ENCODE measurements at regions of chr19 and their contacts with region 1.

Region 1: GRCh38 chr19:8513687-8514504 is at the start of gene ZNF414:
- DNase-seq: peak; percentile 99
- ATAC-seq: peak; percentile 81
- H3K4me3 Mint-ChIP-seq: peak within 1 kb of the TSS; percentile 81
- H3K27ac Mint-ChIP-seq: peak within 1 kb of the TSS; percentile 97
- H3K4me1 Mint-ChIP-seq: peaks cover 55% of the 10 kb centered on the region
- H3K27me3 Mint-ChIP-seq: no peaks in the 10 kb centered on the region
- total RNA-seq, gene ZNF414: 21.0 to 23.7 TPM

Region 2: DNA sequence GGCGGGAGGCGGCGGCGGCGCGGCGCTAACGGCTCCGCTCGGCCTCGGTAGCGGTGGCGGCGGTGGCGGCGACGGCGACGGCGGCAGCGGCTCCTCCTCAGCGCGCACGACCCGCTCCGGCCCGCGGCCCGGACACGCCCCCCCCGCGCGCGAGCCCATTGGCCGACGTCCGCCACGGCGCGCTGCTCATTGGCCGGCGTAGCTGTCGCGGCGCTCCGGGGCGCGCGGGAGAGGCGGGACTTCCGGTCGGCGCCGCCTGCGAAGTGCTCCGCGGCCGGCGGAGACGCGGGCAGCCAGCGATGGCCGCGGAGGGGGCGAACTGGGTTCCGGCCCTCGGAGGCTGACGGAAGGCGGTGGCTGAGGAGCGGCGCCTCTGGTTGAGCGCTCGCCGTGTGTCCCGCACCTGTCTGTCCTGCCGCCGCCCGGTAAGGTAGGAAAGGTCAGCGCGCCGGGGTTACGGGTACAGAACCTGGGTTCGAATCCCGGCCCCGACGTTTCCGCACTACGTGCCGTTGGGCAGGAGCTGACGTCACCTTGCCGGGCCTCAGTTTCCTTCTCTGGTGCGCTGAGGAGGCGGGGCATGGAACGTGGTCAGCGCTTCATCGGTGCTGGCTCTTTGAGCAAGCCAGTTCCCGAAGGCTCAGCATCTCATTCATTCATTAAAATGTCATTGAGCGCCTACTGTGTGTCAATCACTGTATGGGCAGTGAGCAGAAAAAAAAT is 508.2 kb before region 1 on chr19 and contains the start of gene ELAVL1:
- CTCF ChIA-PET with region 1: no interaction called
- POLR2A ChIA-PET with region 1: no interaction called
- intact Hi-C with region 1: loop called in 1 of 2 experiments (anchors 1 kb)
- DNase-seq: peak; percentile 95
- ATAC-seq: peak; percentile 93
- H3K4me3 Mint-ChIP-seq: peak within 1 kb of the TSS; percentile 95
- H3K27ac Mint-ChIP-seq: peak within 1 kb of the TSS; percentile 94
- H3K4me1 Mint-ChIP-seq: peaks cover 36% of the 10 kb centered on the region
- H3K27me3 Mint-ChIP-seq: no peaks in the 10 kb centered on the region
- total RNA-seq, gene ELAVL1: 149 to 184 TPM

Region 3: GRCh38 chr19:8321060-8321985 is 192.6 kb before region 1 on chr19 and contains the starts of genes NDUFA7 and RPS28:
- CTCF ChIA-PET with region 1: no interaction called
- POLR2A ChIA-PET with region 1: no interaction called
- intact Hi-C with region 1: loop called in 1 of 2 experiments (anchors 1 kb)
- DNase-seq: peak; percentile 99
- ATAC-seq: peak; percentile 94
- H3K4me3 Mint-ChIP-seq: peak within 1 kb of the TSS; percentile 97
- H3K27ac Mint-ChIP-seq: peak within 1 kb of the TSS; percentile 97
- H3K4me1 Mint-ChIP-seq: peaks cover 22% of the 10 kb centered on the region
- H3K27me3 Mint-ChIP-seq: no peaks in the 10 kb centered on the region
- total RNA-seq, gene NDUFA7: 90.9 to 112 TPM
- total RNA-seq, gene RPS28: 1,994 to 2,316 TPM

Region 4: GRCh38 chr19:8412783-8413628 is 100.9 kb before region 1 on chr19 and contains the start of gene MARCHF2:
- CTCF ChIA-PET with region 1: interaction called, 3 read pairs
- POLR2A ChIA-PET with region 1: interaction called, 3 read pairs
- intact Hi-C with region 1: loop called (anchors 1 to 5 kb)
- DNase-seq: peak; percentile 97
- ATAC-seq: peak; percentile 100
- H3K4me3 Mint-ChIP-seq: peak within 1 kb of the TSS; percentile 50
- H3K27ac Mint-ChIP-seq: no peak within 1 kb of the TSS
- H3K4me1 Mint-ChIP-seq: peaks cover 5% of the 10 kb centered on the region
- H3K27me3 Mint-ChIP-seq: no peaks in the 10 kb centered on the region
- total RNA-seq, gene MARCHF2: 9.1 to 10.1 TPM

Region 5: DNA sequence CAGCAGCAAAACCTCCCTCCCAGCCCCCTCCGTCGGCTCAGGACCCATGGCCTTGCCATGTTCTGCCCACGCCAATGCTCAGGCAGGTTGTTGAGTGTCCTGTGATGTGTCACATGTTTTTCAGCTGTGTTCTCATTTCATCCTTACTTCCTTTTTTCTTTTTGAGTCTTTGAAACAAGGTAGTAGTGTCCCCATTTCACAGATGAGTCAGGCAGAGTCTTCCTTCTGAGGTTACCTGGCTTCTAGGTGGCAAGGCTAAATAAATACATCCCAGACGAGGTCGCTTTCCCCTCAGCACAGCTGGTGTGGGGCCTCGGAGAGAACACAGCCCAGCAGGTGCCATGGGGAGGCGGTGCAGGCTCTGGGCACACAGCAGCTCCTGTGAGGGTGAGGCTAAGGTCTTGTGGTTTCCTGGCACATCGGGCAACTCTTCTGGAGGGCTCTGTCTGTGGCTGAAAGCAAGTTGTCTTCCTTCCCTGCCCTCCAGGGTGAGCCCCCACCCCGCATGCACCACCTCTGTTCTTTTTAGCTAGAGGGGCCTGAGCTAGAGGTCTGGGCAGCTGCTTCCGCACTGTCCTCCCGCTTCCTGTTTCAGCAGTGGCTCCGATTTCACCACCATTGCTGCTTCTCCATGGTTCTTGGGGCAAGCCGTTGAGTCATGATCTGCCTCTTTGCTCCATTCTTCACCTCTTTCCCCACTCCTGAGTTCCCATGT is 26.6 kb before region 1 on chr19:
- CTCF ChIA-PET with region 1: interaction called, 5 read pairs
- POLR2A ChIA-PET with region 1: interaction called, 4 read pairs
- intact Hi-C with region 1: loop called in 1 of 2 experiments (anchors 1 kb)
- DNase-seq: peak; percentile 85
- ATAC-seq: peak; percentile 90
- H3K4me3 Mint-ChIP-seq: no peak overlapping the region
- H3K27ac Mint-ChIP-seq: peak overlapping the region; percentile 95
- H3K4me1 Mint-ChIP-seq: peaks cover 38% of the 10 kb centered on the region
- H3K27me3 Mint-ChIP-seq: no peaks in the 10 kb centered on the region

Region 6: GRCh38 chr19:8580710-8581281 is 66.9 kb after region 1 on chr19:
- CTCF ChIA-PET with region 1: interaction called, 11 read pairs
- POLR2A ChIA-PET with region 1: interaction called, 4 read pairs
- intact Hi-C with region 1: loop called (anchors 2 to 5 kb)
- DNase-seq: peak; percentile 92
- ATAC-seq: peak; percentile 70
- H3K4me3 Mint-ChIP-seq: no peak overlapping the region
- H3K27ac Mint-ChIP-seq: no peak overlapping the region
- H3K4me1 Mint-ChIP-seq: peaks cover 29% of the 10 kb centered on the region
- H3K27me3 Mint-ChIP-seq: peaks cover 2% of the 10 kb centered on the region

Region 7: GRCh38 chr19:9818734-9819589 is 1305.1 kb after region 1 on chr19 and contains the start of gene FBXL12:
- CTCF ChIA-PET with region 1: no interaction called
- POLR2A ChIA-PET with region 1: no interaction called
- intact Hi-C with region 1: loop called in 1 of 2 experiments (anchors 2 kb)
- DNase-seq: peak; percentile 100
- ATAC-seq: peak; percentile 92
- H3K4me3 Mint-ChIP-seq: peak within 1 kb of the TSS; percentile 88
- H3K27ac Mint-ChIP-seq: peak within 1 kb of the TSS; percentile 90
- H3K4me1 Mint-ChIP-seq: peaks cover 26% of the 10 kb centered on the region
- H3K27me3 Mint-ChIP-seq: no peaks in the 10 kb centered on the region
- total RNA-seq, gene FBXL12: 19.9 to 22.5 TPM

Measured in activated CD4-positive, alpha-beta T cell treated with anti-CD3 and anti-CD28 coated beads for 36 hours (primary cell).